CD14-positive monocyte (primary cell): ENCODE measurements at regions of chr2 and their contacts with region 1.

Region 1: DNA sequence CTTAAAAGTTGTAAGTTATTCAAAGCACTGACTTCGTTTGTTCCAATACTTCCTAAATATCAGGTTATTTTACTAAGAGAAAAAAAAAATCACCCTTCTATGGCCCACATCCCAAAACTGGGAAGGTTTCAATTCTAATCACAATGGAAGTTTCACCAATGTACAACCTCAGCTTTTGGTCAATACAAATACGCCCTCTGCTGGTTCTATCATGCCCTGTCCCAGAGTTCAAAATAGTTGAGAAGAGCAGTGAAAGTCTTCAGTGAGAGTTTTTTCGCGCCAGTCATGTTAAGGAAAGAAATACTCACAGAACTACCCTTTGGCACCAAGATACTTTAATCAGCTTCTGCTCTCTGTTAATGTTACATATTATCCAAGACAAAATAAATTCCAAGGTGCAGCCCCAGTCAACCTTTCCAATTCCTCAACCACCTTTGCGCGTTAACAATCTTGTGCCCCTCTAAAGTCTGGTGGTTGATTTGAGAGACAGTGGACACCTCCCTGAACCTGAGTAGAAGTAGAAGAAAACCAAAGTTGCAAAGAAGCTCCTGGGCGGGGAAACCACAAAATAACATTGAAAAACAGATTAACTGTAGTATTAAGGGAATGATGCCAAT is 59.9 kb downstream of the SUMO1 start:
- DNase-seq: peak; percentile 21 to 49 (median 37)
- H3K4me3 ChIP-seq: no peak overlapping the region
- H3K4me3 Mint-ChIP-seq: no peak overlapping the region
- H3K27ac ChIP-seq: no peak overlapping the region
- H3K27ac Mint-ChIP-seq: no peak overlapping the region
- H3K4me1 ChIP-seq: no peaks in the 10 kb centered on the region
- H3K4me1 Mint-ChIP-seq: no peaks in the 10 kb centered on the region
- H3K27me3 ChIP-seq: no peaks in the 10 kb centered on the region
- H3K27me3 Mint-ChIP-seq: peaks cover 2 to 3% (median 2%) of the 10 kb centered on the region in 3 donors
- CTCF ChIP-seq: peak; percentile 82

Region 2: DNA sequence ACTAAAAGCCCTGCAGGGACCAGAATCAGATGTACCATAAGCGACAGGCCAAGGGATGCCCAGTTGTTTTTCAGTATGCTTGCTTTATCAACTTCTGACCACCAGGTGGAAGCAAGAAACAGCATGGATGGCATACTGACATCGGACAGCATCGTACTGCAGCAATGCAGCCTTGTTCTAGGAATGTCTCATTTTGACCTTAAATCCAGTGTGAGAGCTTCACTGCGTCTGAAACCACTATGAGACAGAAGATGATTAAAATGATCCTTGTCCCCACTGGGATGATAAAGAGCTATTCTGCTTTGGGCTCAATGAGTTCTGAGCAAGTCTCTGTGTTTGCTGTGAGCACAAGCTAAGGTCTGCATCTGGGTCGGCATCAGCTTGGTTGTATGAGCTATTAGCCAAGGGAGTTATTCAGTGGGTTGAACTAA is 317.8 kb before region 1 on chr2:
- intact Hi-C with region 1: loop called (anchors 2 to 5 kb)
- DNase-seq: peak; percentile 2 to 27 (median 22)
- H3K4me3 ChIP-seq: no peak overlapping the region
- H3K4me3 Mint-ChIP-seq: peak overlapping the region in 1 of 2 donors; percentile 49
- H3K27ac ChIP-seq: no peak overlapping the region
- H3K27ac Mint-ChIP-seq: no peak overlapping the region
- H3K4me1 ChIP-seq: no peaks in the 10 kb centered on the region
- H3K4me1 Mint-ChIP-seq: peaks cover 11% of the 10 kb centered on the region
- H3K27me3 ChIP-seq: peaks cover 26% of the 10 kb centered on the region in 2 donors
- H3K27me3 Mint-ChIP-seq: peaks cover 26 to 33% (median 28%) of the 10 kb centered on the region in 3 donors
- CTCF ChIP-seq: peak; percentile 82

Region 3: DNA sequence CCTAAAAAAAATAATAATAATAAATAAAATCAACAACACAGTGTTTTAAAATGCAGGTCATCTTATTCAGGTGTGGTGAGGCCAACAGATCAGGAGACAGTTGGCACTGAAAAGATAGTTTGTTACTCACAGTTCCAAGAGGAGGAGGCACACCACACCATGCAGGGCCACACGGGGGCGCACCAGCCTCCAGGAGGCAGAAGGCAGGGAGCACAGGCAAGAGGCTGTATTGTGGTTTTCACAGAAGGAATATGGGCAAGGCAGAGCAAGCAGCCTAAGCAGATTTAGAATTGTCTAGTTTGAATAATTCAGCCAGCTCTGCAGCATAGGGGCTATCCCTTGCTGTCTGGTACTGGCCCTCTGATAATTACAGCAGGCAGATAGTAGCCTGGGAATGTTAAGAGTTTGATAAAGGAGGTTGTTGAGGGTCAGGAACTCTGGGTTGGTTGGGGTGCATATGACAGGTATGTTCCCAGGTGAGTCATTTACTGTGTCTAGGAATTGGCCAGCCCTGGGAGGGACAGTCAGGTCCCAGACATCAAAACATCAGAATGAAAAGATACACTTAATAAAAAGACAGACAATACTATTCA is 74.1 kb before region 1 on chr2:
- intact Hi-C with region 1: loop called (anchors 2 to 10 kb)
- DNase-seq: peak; percentile 17 to 27 (median 18)
- H3K4me3 ChIP-seq: no peak overlapping the region
- H3K4me3 Mint-ChIP-seq: no peak overlapping the region
- H3K27ac ChIP-seq: no peak overlapping the region
- H3K27ac Mint-ChIP-seq: no peak overlapping the region
- H3K4me1 ChIP-seq: no peaks in the 10 kb centered on the region
- H3K4me1 Mint-ChIP-seq: peaks cover 2% of the 10 kb centered on the region
- H3K27me3 ChIP-seq: no peaks in the 10 kb centered on the region
- H3K27me3 Mint-ChIP-seq: peaks cover 2 to 5% (median 4%) of the 10 kb centered on the region in 3 donors
- CTCF ChIP-seq: peak; percentile 72